Tibial artery (tissue), 4 donors: ENCODE measurements at regions of chr12 and their contacts with region 1.

Region 1: DNA sequence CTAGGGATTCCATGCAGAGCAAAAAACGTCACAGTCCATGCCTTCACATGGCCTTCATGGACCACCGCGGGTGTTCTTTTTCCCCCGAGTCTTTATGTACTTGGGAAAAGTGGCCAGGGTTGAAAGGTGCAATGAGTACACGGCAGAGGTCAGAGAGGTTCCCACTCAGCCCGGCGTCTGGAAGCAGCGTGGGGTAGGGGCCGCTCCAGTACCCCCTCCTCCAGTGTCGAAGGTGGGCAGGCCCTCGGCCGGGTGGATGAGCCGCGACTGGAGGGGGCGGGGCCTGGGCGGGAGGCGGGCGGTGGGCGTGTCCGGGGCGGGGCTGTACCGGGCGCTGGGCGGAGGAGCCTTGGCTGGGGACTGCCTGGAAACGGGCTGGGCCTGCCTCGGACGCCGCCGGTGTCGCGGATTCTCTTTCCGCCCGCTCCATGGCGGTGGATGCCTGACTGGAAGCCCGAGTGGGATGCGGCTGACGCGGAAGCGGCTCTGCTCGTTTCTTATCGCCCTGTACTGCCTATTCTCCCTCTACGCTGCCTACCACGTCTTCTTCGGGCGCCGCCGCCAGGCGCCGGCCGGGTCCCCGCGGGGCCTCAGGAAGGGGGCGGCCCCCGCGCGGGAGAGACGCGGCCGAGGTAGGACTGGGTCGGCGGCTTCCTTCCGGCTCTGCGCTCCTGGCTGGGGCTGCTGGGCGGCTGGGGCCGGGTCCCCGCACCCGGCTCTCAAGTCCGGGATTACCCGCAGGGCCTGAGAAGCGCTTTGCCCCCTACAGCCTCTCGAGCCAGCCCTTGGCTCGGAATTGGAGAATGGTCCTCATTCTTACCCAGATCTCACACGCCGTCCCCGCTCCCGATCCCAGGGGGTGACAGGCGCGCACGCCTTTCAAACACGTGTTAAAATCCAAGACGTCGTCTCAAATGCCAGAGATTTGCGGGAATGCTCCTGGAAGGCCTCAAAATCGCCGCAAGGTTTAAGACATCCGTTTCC is at the start of gene RXYLT1:
- DNase-seq: peak; percentile 67 to 91
- H3K4me3 ChIP-seq: peak within 1 kb of the TSS; percentile 64 to 69
- H3K27ac ChIP-seq: peak within 1 kb of the TSS; percentile 86 to 90
- H3K4me1 ChIP-seq: peaks cover 0 to 11% (median 6%) of the 10 kb centered on the region in 4 donors
- H3K27me3 ChIP-seq: no peaks in the 10 kb centered on the region
- CTCF ChIP-seq: no peak

Region 2: DNA sequence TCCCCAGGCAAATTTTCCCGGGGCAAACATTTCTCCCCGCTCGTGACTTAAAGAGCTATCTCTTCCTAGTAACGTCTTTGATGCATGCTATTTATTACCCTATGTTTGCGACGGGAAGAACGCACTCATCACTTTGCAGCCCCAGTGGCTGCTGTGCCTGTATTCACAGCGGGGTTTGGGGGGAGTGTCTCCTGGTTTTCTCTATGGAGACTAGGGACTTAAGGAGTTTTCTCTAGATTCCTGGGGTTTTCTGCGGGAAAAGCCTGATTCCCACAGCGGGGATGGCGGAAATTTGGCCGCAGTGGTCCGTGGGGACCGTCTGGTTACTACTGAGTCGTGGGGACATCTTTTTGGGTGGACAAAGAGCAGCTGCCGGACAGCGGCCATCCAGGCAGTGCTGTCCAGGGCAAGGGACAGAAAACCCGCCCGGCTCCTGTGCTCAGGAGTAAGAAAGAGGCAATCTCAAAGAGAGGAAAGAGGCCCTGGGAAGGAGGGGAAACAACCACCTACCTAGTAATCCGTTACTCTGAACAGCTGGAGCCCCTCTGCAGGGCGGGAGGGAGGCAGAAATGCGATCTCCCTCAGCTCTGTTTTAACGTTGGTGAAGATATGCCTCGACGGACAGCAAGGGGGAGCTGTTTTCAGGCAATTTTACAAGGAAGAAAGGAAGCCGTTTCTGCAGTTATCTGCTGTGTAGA is 628.0 kb before region 1 on chr12:
- intact Hi-C with region 1: loop called (anchors 5 kb)
- DNase-seq: peak; percentile 27 to 68
- H3K4me3 ChIP-seq: peak overlapping the region; percentile 76 to 79
- H3K27ac ChIP-seq: peak overlapping the region; percentile 90 to 91
- H3K4me1 ChIP-seq: peaks cover 0 to 11% (median 4%) of the 10 kb centered on the region in 4 donors
- H3K27me3 ChIP-seq: peaks cover 0 to 7% of the 10 kb centered on the region in 2 donors
- CTCF ChIP-seq: peak; percentile 74 to 82